PC-9 (cell line): ENCODE measurements at regions of chr2 and their contacts with region 1.

Region 1: DNA sequence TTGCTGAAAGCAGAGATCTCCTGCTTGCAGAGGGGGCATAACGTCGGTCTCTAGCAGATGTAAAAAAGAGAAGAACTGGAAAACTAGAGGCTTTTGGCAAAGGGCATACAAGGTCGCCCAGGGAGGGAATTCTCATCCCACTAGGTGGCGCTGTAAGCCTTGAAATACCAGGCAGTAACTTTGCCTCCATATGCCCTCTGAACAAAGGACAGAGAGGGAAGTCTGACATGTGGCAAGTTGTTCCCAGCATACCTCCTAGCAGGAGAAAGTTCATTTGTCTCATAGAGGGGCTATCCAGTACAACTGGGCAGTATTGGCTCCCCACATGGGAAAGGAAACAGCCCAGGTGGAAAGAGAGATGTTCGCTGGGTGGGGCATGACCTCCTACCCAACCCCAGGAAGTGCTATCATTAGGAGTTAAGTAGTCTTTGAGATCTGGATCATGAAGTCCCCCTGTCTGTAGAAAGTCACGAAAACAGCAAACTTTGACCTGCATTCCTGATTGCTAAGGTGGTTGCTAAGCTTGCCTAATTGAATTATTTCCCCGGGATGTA is 39.9 kb downstream of the STK17B start:
- DNase-seq: peak; percentile 25 to 47
- H3K4me3 ChIP-seq: no peak overlapping the region
- H3K27ac ChIP-seq: no peak overlapping the region
- H3K4me1 ChIP-seq: no peaks in the 10 kb centered on the region
- H3K27me3 ChIP-seq: no peaks in the 10 kb centered on the region
- CTCF ChIP-seq: peak; percentile 76

Region 2: GRCh38 chr2:195664528-195664927 is 466.9 kb before region 1 on chr2:
- CTCF ChIA-PET with region 1: no interaction called
- POLR2A ChIA-PET with region 1: no interaction called
- intact Hi-C with region 1: no loop called
- DNase-seq: no peak
- H3K4me3 ChIP-seq: no peak overlapping the region
- H3K27ac ChIP-seq: no peak overlapping the region
- H3K4me1 ChIP-seq: no peaks in the 10 kb centered on the region
- H3K27me3 ChIP-seq: no peaks in the 10 kb centered on the region
- CTCF ChIP-seq: peak; percentile 37; the same call in 1 of the 2 replicates

Region 3: GRCh38 chr2:196337208-196337953 is 205.9 kb after region 1 on chr2:
- CTCF ChIA-PET with region 1: no interaction called
- POLR2A ChIA-PET with region 1: no interaction called
- intact Hi-C with region 1: loop called (anchors 1 kb)
- DNase-seq: no peak
- H3K4me3 ChIP-seq: no peak overlapping the region
- H3K27ac ChIP-seq: no peak overlapping the region
- H3K4me1 ChIP-seq: peaks cover 21% of the 10 kb centered on the region
- H3K27me3 ChIP-seq: no peaks in the 10 kb centered on the region
- CTCF ChIP-seq: peak; percentile 70